Spleen (tissue), 13 donors: ENCODE measurements at regions of chr16 and their contacts with region 1.

Region 1: GRCh38 chr16:8892101-8892575 is 10.0 kb downstream of the LITAFD start:
- DNase-seq: peak; percentile 83
- H3K4me3 ChIP-seq: no peak overlapping the region
- H3K27ac ChIP-seq: peak overlapping the region in 5 of 8 donors; percentile 59 to 74 (median 63)
- H3K4me1 ChIP-seq: peaks cover 5 to 39% (median 14%) of the 10 kb centered on the region in 6 donors
- H3K27me3 ChIP-seq: no peaks in the 10 kb centered on the region
- CTCF ChIP-seq: no peak
- POLR2A ChIP-seq: no peak

Region 2: GRCh38 chr16:8712589-8713361 is 179.4 kb before region 1 on chr16:
- intact Hi-C with region 1: no loop called
- DNase-seq: no peak
- H3K4me3 ChIP-seq: no peak overlapping the region
- H3K27ac ChIP-seq: no peak overlapping the region
- H3K4me1 ChIP-seq: no peaks in the 10 kb centered on the region
- H3K27me3 ChIP-seq: no peaks in the 10 kb centered on the region
- CTCF ChIP-seq: no peak
- POLR2A ChIP-seq: no peak

Region 3: DNA sequence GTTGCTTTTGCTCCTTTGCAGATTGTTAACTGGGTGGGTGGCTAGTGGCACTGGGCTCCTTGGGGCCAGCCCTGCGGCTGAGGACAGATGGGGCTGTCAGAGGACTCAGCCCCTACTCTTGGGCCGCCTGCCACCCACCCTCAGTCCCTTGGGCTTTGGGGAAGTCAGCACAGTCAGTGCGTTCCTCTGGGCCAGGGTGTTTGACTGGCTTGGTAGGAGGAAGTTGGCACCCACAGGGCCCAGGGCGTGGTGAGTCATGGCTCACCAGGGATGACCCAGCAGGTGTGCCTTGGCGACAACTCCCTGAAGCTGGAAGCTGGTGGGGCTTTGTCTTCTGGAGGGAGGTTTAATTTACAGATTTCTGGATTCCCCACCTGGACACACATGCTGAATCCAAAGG is 231.7 kb after region 1 on chr16:
- intact Hi-C with region 1: loop called (anchors 10 kb)
- DNase-seq: peak; percentile 93
- H3K4me3 ChIP-seq: no peak overlapping the region
- H3K27ac ChIP-seq: peak overlapping the region in 4 of 8 donors; percentile 29 to 68 (median 55)
- H3K4me1 ChIP-seq: peaks cover 26 to 100% (median 57%) of the 10 kb centered on the region in 6 donors
- H3K27me3 ChIP-seq: no peaks in the 10 kb centered on the region
- CTCF ChIP-seq: no peak
- POLR2A ChIP-seq: no peak